ENCODE measurements at regions of chr1 and their contacts with region 1.

Region 1: GRCh38 chr1:54488779-54489626 is 59.0 kb upstream of the ACOT11 start:
- DNase-seq: peak; percentile 51 to 62
- ATAC-seq: peak; percentile 67 to 70
- H3K4me3 ChIP-seq: peak overlapping the region; percentile 77 to 89 (median 85)
- H3K27ac ChIP-seq: peak overlapping the region; percentile 92 to 95 (median 94)
- H3K4me1 ChIP-seq: peaks cover 11 to 20% of the 10 kb centered on the region in 2 donors
- H3K27me3 ChIP-seq: no peaks in the 10 kb centered on the region
- CTCF ChIP-seq: peak; percentile 96 to 99 (median 97)
- POLR2A ChIP-seq: no peak

Region 2: GRCh38 chr1:54052934-54053744 is 435.9 kb before region 1 on chr1 and contains the starts of genes TCEANC2 and TMEM59:
- in situ Hi-C with region 1: no loop called
- intact Hi-C with region 1: loop called (anchors 5 kb)
- DNase-seq: peak; percentile 97 to 98
- ATAC-seq: peak; percentile 93 to 94
- H3K4me3 ChIP-seq: peak within 1 kb of the TSS; percentile 82 to 99 (median 96)
- H3K27ac ChIP-seq: peak within 1 kb of the TSS; percentile 98 to 99 (median 98)
- H3K4me1 ChIP-seq: peaks cover 49% of the 10 kb centered on the region in 2 donors
- H3K27me3 ChIP-seq: no peaks in the 10 kb centered on the region
- CTCF ChIP-seq: peak in 1 of 5 experiments; percentile 10
- POLR2A ChIP-seq: peak; percentile 80 to 85
- total RNA-seq, gene TCEANC2: 2.6 to 9.5 (median 7.0) TPM
- total RNA-seq, gene TMEM59: 156 to 248 (median 224) TPM

Region 3: DNA sequence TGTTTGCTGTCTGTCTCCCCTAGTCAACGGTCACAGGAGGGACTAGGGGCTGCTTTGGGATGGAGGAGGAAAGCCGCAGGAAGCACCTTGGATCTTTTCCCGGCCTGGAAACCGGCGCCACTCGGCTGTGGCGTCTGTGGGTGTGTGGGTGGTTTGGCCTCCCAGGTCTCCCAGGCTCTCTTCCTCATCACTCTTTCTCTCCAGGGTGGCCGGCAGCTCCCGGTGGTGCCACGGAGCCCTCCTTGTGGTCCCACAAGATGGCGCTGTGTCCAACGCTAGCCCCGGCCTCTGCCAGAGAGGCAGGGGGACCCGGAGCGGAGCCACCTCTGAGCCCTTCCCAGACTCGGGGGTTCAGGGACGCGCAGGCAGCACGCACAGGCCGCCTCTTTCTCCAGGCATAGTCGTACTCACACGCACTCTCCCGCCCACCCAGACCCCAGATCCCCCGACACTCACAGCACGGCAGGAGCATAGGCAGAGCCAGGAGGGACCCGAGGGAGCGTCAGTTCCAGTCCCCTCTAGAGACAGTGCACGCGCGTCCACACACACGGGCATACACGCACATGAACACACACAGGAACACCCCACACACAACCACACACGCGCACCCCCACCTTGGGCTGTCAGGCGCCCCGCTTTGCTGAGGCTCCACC is 367.4 kb before region 1 on chr1:
- in situ Hi-C with region 1: loop called in 3 of 4 experiments (anchors 5 to 10 kb)
- intact Hi-C with region 1: loop called (anchors 1 kb)
- DNase-seq: peak; percentile 51 to 73
- ATAC-seq: peak; percentile 33 to 72
- H3K4me3 ChIP-seq: peak overlapping the region; percentile 35 to 49 (median 42)
- H3K27ac ChIP-seq: no peak overlapping the region
- H3K4me1 ChIP-seq: peaks cover 10 to 17% of the 10 kb centered on the region in 2 donors
- H3K27me3 ChIP-seq: no peaks in the 10 kb centered on the region
- CTCF ChIP-seq: peak; percentile 67 to 88 (median 79)
- POLR2A ChIP-seq: no peak

Region 4: GRCh38 chr1:54273092-54273794 is 215.8 kb before region 1 on chr1:
- in situ Hi-C with region 1: loop called (anchors 10 to 25 kb)
- intact Hi-C with region 1: loop called (anchors 1 kb)
- DNase-seq: peak; percentile 84 to 91
- ATAC-seq: peak; percentile 82 to 84
- H3K4me3 ChIP-seq: peak overlapping the region; percentile 30 to 43 (median 36)
- H3K27ac ChIP-seq: peak overlapping the region; percentile 89 to 92 (median 92)
- H3K4me1 ChIP-seq: peaks cover 74 to 80% of the 10 kb centered on the region in 2 donors
- H3K27me3 ChIP-seq: no peaks in the 10 kb centered on the region
- CTCF ChIP-seq: peak; percentile 59 to 82 (median 67)
- POLR2A ChIP-seq: peak; percentile 21

Measured in gastrocnemius medialis (tissue), 4 donors.